ENCODE measurements at regions of chr15 and their contacts with region 1.

Region 1: DNA sequence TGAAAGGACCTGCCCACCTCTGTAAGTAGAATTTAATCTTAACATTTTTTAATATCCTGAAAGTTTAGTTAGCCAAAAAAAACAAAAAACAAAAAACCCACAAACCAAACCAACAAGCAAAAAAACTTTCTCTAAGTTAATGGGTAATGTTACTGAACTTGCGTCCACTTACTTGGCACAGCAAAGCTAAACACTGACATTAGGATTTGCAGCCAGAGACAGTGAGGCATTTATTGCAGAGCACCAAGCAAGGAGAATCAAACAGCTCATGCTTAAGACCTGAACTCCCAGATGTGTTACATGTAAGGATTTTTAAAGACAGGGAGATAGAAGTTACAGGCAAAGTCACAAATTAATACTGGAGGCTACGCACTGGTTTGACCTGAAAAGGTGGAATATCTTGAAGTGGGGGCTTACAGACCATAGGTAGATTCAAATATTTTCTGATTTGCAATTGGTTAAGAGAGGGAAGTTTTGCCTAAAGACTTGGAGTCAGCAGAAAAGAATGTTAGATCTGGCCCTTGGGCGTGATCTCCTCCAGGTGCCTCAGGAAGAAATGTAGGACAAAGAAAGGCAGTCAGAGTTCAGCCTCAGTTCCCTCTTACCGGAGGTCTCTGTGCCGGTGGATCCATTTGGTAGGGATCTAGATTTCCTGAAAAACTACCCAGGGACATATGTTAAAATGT is 205.0 kb downstream of the ADAMTSL3 start:
- DNase-seq: no peak
- H3K4me3 ChIP-seq: no peak overlapping the region
- H3K27ac ChIP-seq: no peak overlapping the region
- H3K4me1 ChIP-seq: peaks cover 0 to 10% (median 0%) of the 10 kb centered on the region in 4 donors
- H3K27me3 ChIP-seq: no peaks in the 10 kb centered on the region
- CTCF ChIP-seq: no peak

Region 2: GRCh38 chr15:83890587-83890986 is 31.6 kb after region 1 on chr15:
- intact Hi-C with region 1: loop called (anchors 1 kb)
- DNase-seq: peak in 1 of 2 donors; percentile 25
- H3K4me3 ChIP-seq: no peak overlapping the region
- H3K27ac ChIP-seq: no peak overlapping the region
- H3K4me1 ChIP-seq: no peaks in the 10 kb centered on the region
- H3K27me3 ChIP-seq: no peaks in the 10 kb centered on the region
- CTCF ChIP-seq: no peak

Region 3: GRCh38 chr15:83992324-83993031 is 133.5 kb after region 1 on chr15:
- intact Hi-C with region 1: no loop called
- DNase-seq: no peak
- H3K4me3 ChIP-seq: no peak overlapping the region
- H3K27ac ChIP-seq: peak overlapping the region; percentile 76
- H3K4me1 ChIP-seq: peaks cover 0 to 48% (median 27%) of the 10 kb centered on the region in 4 donors
- H3K27me3 ChIP-seq: no peaks in the 10 kb centered on the region
- CTCF ChIP-seq: no peak

Region 4: DNA sequence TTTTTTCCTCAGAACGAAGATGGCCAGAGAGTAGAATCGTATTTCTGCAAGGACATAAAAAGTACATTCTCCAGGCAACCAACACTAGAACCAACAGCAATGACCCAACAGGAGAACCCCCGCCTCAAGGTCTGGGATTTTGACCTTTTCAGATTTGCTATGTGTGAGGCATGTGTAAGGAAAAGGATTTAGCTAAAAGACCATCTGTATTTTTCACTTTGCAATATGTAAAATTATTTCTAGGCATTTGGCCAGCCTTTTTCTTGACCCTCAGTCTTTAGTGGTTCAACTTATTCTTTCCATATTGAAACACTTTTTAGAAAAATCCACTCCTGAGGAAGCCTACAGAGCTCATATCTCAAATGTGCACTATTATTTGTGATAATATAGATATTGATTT is 157.4 kb after region 1 on chr15:
- intact Hi-C with region 1: no loop called
- DNase-seq: no peak
- H3K4me3 ChIP-seq: no peak overlapping the region
- H3K27ac ChIP-seq: no peak overlapping the region
- H3K4me1 ChIP-seq: no peaks in the 10 kb centered on the region
- H3K27me3 ChIP-seq: no peaks in the 10 kb centered on the region
- CTCF ChIP-seq: no peak

Measured in tibial artery (tissue), 4 donors.